Right cardiac atrium (tissue), 5 donors: ENCODE measurements at regions of chr3 and their contacts with region 1.

Region 1: DNA sequence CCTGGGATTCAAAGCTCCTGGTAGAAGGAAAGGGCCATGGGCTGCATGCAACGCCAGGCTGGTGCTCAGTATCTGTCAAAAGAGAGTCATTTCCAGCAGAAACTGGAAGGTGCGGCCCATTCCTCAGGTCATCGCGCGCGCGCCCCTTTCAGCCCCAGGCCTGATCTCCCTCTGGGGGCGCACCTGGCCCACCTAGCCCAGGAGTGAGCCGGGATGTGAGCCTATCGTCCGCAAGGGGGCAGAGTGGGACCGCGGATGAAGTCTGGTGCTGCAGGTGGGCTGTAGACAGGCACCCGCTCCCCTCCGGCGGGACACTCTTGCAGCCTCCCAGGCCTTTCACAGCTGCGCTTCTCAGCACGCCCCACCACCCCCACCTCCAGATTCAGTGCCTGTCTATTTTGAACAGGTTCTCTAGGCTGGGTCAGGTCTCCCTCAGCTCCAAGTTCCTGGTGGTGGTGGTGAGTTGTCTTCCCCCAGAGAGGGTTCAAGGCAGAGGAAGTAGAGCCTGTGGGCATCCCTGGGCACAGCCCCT is 5.8 kb upstream of the RPL29 start:
- DNase-seq: peak; percentile 73 to 91 (median 90)
- ATAC-seq: peak; percentile 60 to 65
- H3K4me3 ChIP-seq: no peak overlapping the region
- H3K27ac ChIP-seq: no peak overlapping the region
- H3K4me1 ChIP-seq: peaks cover 7% of the 10 kb centered on the region
- H3K27me3 ChIP-seq: no peaks in the 10 kb centered on the region

Region 2: GRCh38 chr3:51591231-51591630 is 410.3 kb before region 1 on chr3:
- intact Hi-C with region 1: no loop called
- DNase-seq: no peak
- ATAC-seq: no peak
- H3K4me3 ChIP-seq: no peak overlapping the region
- H3K27ac ChIP-seq: no peak overlapping the region
- H3K4me1 ChIP-seq: peaks cover 2% of the 10 kb centered on the region
- H3K27me3 ChIP-seq: no peaks in the 10 kb centered on the region

Region 3: DNA sequence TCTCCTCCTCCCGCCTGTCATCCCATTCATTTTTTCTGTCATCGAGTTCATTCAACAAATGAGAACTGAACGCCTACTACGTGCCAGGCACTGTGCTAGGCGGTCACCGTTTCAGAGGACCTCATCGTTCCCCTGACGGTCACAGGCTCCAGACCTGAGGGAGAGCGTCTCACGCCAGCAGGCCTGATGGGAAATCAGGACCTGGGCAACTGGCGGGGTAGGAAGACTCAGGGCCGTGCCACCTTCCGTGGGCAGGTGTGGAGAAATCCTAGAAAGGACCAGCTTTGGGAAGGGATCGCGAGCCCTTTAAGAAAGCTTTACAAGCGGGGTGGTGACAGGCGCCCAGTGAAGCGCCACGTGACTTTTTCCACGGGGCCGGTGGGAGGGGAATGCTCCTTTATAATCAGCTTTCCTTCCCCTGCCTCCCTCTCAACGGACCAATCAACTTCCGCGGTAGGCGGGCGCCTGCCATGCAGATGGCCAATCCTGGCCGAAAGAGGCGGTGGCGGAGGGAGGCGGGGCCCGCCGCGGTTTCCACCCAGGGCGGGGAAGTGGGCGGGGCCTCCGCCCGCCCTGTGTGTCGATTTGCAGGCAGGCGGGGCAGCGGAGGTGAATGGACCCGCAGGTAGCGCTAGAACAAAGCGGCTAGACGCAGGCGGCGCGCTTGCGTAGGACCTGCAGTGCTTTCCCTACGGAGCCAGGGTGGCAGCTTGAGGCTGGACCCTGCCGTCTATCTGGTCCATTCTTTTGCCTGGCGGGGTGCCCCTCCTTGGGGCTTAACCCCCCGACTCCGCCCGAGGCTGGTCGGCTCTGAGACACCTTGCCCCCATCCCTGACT is 55.7 kb after region 1 on chr3:
- intact Hi-C with region 1: loop called (anchors 2 to 5 kb)
- DNase-seq: peak; percentile 99 to 100 (median 100)
- ATAC-seq: peak; percentile 90 to 92
- H3K4me3 ChIP-seq: peak overlapping the region; percentile 91
- H3K27ac ChIP-seq: peak overlapping the region; percentile 97
- H3K4me1 ChIP-seq: peaks cover 8% of the 10 kb centered on the region
- H3K27me3 ChIP-seq: no peaks in the 10 kb centered on the region

Region 4: GRCh38 chr3:52123106-52123725 is 121.7 kb after region 1 on chr3:
- intact Hi-C with region 1: loop called (anchors 5 kb)
- DNase-seq: peak; percentile 68 to 91 (median 90)
- ATAC-seq: peak; percentile 79
- H3K4me3 ChIP-seq: no peak overlapping the region
- H3K27ac ChIP-seq: no peak overlapping the region
- H3K4me1 ChIP-seq: peaks cover 17% of the 10 kb centered on the region
- H3K27me3 ChIP-seq: no peaks in the 10 kb centered on the region

Region 5: GRCh38 chr3:52144034-52144795 is 142.7 kb after region 1 on chr3:
- intact Hi-C with region 1: loop called (anchors 1 to 5 kb)
- DNase-seq: peak; percentile 86 to 95 (median 92)
- ATAC-seq: peak; percentile 71 to 75
- H3K4me3 ChIP-seq: no peak overlapping the region
- H3K27ac ChIP-seq: no peak overlapping the region
- H3K4me1 ChIP-seq: peaks cover 4% of the 10 kb centered on the region
- H3K27me3 ChIP-seq: no peaks in the 10 kb centered on the region

Region 6: GRCh38 chr3:52278510-52279069 is 277.1 kb after region 1 on chr3 and contains the start of gene WDR82:
- intact Hi-C with region 1: loop called in 1 of 4 experiments (anchors 10 kb)
- DNase-seq: peak; percentile 98 to 100 (median 99)
- ATAC-seq: peak; percentile 95 to 97
- H3K4me3 ChIP-seq: peak within 1 kb of the TSS; percentile 84
- H3K27ac ChIP-seq: peak within 1 kb of the TSS; percentile 95
- H3K4me1 ChIP-seq: peaks cover 8% of the 10 kb centered on the region
- H3K27me3 ChIP-seq: no peaks in the 10 kb centered on the region
- total RNA-seq, gene WDR82: 61.0 to 65.5 (median 63.2) TPM